ENCODE measurements at regions of chr17 and their contacts with region 1.

Region 1: GRCh38 chr17:80981062-80981902 is 10.4 kb upstream of the CHMP6 start:
- DNase-seq: peak; percentile 54 to 72
- ATAC-seq: peak; percentile 54 to 79 (median 78)
- H3K4me3 ChIP-seq: no peak overlapping the region
- H3K4me3 Mint-ChIP-seq: no peak overlapping the region
- H3K27ac ChIP-seq: no peak overlapping the region
- H3K27ac Mint-ChIP-seq: peak overlapping the region in 1 of 2 donors; percentile 3
- H3K4me1 ChIP-seq: peaks cover 4% of the 10 kb centered on the region
- H3K4me1 Mint-ChIP-seq: peaks cover 0 to 14% of the 10 kb centered on the region in 2 donors
- H3K27me3 ChIP-seq: peaks cover 4% of the 10 kb centered on the region
- H3K27me3 Mint-ChIP-seq: peaks cover 10 to 11% of the 10 kb centered on the region in 2 donors
- CTCF ChIP-seq: peak; percentile 95

Region 2: DNA sequence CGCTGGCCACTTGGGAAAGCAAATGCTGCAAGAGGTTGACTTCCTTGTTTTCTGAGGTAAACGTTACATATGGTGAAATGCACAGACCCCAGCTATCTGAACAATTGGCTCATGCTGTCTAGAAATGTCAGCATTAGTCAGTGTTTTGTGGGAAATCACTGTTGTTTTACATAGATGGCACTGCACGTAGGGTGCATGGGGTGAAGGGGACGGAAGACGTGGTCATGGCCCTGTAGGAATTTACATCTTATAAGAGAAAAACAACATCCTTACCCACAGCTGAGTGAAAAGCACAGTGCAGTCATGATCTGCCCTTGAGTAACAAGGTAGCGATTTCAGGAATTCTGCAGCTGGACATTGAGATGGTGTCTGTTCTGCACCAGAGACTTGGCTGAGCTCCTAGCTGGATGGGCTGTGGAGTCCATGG is 421.4 kb before region 1 on chr17:
- intact Hi-C with region 1: no loop called
- DNase-seq: no peak
- ATAC-seq: no peak
- H3K4me3 ChIP-seq: no peak overlapping the region
- H3K4me3 Mint-ChIP-seq: no peak overlapping the region
- H3K27ac ChIP-seq: no peak overlapping the region
- H3K27ac Mint-ChIP-seq: no peak overlapping the region
- H3K4me1 ChIP-seq: no peaks in the 10 kb centered on the region
- H3K4me1 Mint-ChIP-seq: peaks cover 16 to 30% of the 10 kb centered on the region in 2 donors
- H3K27me3 ChIP-seq: no peaks in the 10 kb centered on the region
- H3K27me3 Mint-ChIP-seq: no peaks in the 10 kb centered on the region
- CTCF ChIP-seq: no peak

Region 3: GRCh38 chr17:80575057-80575875 is 406.0 kb before region 1 on chr17:
- intact Hi-C with region 1: loop called (anchors 5 kb)
- DNase-seq: peak; percentile 90 to 96
- ATAC-seq: peak; percentile 100
- H3K4me3 ChIP-seq: no peak overlapping the region
- H3K4me3 Mint-ChIP-seq: no peak overlapping the region
- H3K27ac ChIP-seq: no peak overlapping the region
- H3K27ac Mint-ChIP-seq: no peak overlapping the region
- H3K4me1 ChIP-seq: no peaks in the 10 kb centered on the region
- H3K4me1 Mint-ChIP-seq: peaks cover 8 to 9% of the 10 kb centered on the region in 2 donors
- H3K27me3 ChIP-seq: no peaks in the 10 kb centered on the region
- H3K27me3 Mint-ChIP-seq: no peaks in the 10 kb centered on the region
- CTCF ChIP-seq: peak; percentile 100

Region 4: DNA sequence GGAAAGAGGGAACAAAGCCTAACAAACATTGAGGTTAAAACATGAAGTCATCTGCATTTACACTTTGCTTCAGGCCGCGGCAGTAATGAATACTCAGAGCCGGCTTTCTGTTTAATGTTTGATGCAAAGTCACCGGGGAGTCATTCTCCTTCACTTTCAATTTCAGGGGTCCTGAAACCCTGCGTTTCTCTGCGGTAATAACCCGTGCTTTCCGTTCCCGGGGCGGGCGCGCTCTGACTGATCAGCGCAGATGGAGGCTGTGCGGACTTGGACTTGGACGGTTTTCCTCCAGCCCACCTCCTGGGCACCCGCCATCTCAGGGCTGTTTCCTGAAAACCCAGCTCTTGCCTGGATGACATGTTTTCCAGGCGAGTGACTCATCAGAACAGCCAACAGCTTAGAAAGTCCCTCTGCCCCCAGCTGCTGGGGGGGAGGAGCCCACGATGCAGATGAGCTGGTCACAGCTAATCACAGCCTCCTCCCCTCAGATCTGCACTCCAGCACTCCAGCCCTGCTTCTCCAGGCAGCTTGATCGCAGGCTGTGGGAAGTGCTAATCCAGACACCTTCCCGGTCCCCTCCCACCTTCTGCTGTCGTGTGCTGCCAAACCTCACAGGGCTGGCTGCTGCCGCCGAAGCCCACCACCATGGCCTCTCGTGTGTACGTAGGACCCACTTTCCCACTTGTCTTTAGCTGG is 148.2 kb before region 1 on chr17:
- intact Hi-C with region 1: no loop called
- DNase-seq: peak; percentile 76 to 84
- ATAC-seq: peak; percentile 89 to 94 (median 91)
- H3K4me3 ChIP-seq: peak overlapping the region; percentile 52
- H3K4me3 Mint-ChIP-seq: peak overlapping the region; percentile 90
- H3K27ac ChIP-seq: peak overlapping the region; percentile 83
- H3K27ac Mint-ChIP-seq: peak overlapping the region; percentile 95 to 98
- H3K4me1 ChIP-seq: peaks cover 16% of the 10 kb centered on the region
- H3K4me1 Mint-ChIP-seq: peaks cover 19 to 31% of the 10 kb centered on the region in 2 donors
- H3K27me3 ChIP-seq: no peaks in the 10 kb centered on the region
- H3K27me3 Mint-ChIP-seq: no peaks in the 10 kb centered on the region
- CTCF ChIP-seq: no peak